ENCODE measurements at regions of chr15 and their contacts with region 1.

Region 1: DNA sequence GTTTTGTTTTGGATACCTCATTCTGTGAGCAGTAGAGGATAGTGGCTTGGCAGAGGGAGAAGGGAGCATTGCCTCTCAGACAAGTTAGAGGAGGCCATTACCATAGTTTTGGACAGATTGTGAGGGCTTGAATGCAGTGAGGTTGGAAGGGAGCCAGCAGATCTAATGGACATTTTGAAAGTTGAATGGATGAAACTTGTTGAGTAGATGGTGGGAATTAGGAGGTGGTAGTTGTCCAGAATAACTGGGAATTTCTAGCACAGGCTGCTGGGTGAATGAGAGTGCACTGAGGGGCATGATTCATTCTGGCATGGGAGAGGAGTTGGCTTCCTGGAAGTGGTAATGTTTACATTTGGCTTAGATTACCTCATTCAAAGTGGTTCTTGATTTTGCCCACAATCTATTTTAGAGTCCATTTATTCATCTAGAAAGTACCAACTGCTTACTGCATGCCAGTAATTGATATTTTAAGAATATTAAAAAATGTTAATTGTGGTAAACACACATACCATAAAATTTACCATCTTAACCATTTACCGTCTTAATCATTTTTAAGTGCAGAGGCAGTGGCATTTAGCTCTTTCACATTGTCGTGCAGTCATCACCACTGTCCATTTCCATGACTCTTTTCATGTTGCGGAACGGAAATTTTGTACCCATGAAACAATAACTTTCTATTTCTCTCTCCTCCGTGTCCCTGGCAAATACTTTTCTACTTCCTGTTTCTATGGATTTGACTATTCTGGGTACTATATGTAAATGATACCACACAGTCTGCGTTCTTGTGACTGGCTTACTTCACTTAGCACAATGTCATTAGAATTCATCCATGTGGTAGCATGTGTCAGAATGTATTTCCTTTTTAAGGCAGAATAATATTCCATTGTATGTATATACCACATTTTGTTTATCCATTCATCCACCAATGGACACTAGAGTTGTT is 27.7 kb downstream of the AKAP13 start:
- DNase-seq: peak; percentile 55
- H3K4me3 ChIP-seq: peak overlapping the region; percentile 16
- H3K27ac ChIP-seq: peak overlapping the region; percentile 97
- H3K4me1 ChIP-seq: peaks cover 92% of the 10 kb centered on the region
- CTCF ChIP-seq: no peak

Region 2: GRCh38 chr15:85361323-85361722 is 46.8 kb before region 1 on chr15:
- CTCF ChIA-PET with region 1: no interaction called
- POLR2A ChIA-PET with region 1: interaction called, 12 read pairs
- intact Hi-C with region 1: no loop called
- DNase-seq: peak; percentile 16
- H3K4me3 ChIP-seq: no peak overlapping the region
- H3K27ac ChIP-seq: no peak overlapping the region
- H3K4me1 ChIP-seq: peaks cover 11% of the 10 kb centered on the region
- CTCF ChIP-seq: no peak

Region 3: GRCh38 chr15:85388566-85389305 is 19.3 kb before region 1 on chr15:
- CTCF ChIA-PET with region 1: interaction called, 14 read pairs
- POLR2A ChIA-PET with region 1: interaction called, 335 read pairs
- intact Hi-C with region 1: loop called (anchors 2 kb)
- DNase-seq: no peak
- H3K4me3 ChIP-seq: peak overlapping the region; percentile 58
- H3K27ac ChIP-seq: peak overlapping the region; percentile 88
- H3K4me1 ChIP-seq: peaks cover 85% of the 10 kb centered on the region
- CTCF ChIP-seq: no peak

Region 4: GRCh38 chr15:85394552-85395333 is 13.3 kb before region 1 on chr15:
- CTCF ChIA-PET with region 1: interaction called, 14 read pairs
- POLR2A ChIA-PET with region 1: interaction called, 335 read pairs
- intact Hi-C with region 1: loop called (anchors 2 kb)
- DNase-seq: no peak
- H3K4me3 ChIP-seq: no peak overlapping the region
- H3K27ac ChIP-seq: no peak overlapping the region
- H3K4me1 ChIP-seq: peaks cover 74% of the 10 kb centered on the region
- CTCF ChIP-seq: no peak

Region 5: DNA sequence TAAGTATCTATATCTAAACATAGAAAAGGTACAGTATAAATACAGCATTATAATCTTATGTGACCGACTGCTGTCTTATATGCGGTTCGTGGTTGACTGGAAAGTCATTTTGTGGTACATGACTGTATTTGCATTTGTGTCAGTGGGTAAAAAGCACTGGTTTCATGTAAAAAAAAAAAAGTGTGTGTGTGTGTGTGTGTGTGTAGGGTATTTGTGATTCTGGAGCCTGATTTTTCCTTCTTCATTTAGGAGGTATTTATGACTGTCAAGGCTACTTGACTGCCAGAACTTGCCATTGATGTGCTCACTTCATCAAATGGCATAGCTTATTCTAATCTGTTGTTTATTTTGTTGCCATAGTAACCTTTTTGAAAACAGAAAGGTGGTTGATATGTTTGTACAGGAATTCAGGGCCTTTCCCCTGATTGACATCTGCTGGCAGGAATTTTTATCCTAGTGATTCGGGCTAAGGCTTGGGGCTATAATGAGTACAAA is 35.6 kb after region 1 on chr15:
- CTCF ChIA-PET with region 1: no interaction called
- POLR2A ChIA-PET with region 1: interaction called, 24 read pairs
- intact Hi-C with region 1: loop called (anchors 5 kb)
- DNase-seq: peak; percentile 52
- H3K4me3 ChIP-seq: peak overlapping the region; percentile 56
- H3K27ac ChIP-seq: peak overlapping the region; percentile 70
- H3K4me1 ChIP-seq: peaks cover 57% of the 10 kb centered on the region
- CTCF ChIP-seq: no peak

Region 6: DNA sequence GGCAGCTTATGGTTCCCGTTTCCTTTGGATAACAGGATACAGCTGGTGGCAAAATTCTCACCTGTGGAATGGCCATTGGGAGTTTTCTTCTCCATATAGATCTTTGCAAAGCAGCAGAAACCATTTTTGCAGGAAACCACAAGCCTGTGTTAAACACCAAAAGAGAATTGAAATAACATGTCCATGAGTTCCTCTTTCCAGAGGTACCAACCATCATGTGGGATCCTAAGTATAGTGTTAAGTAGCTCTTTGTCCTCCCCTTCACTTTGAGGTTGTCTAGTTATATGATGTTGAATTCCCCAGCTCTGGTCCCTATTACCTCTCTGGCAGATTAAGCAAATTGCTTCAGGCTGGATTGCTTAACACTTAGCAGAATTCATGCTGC is 67.2 kb after region 1 on chr15:
- CTCF ChIA-PET with region 1: interaction called, 10 read pairs
- POLR2A ChIA-PET with region 1: interaction called, 66 read pairs
- intact Hi-C with region 1: no loop called
- DNase-seq: peak; percentile 85
- H3K4me3 ChIP-seq: peak overlapping the region; percentile 52
- H3K27ac ChIP-seq: peak overlapping the region; percentile 92
- H3K4me1 ChIP-seq: peaks cover 99% of the 10 kb centered on the region
- CTCF ChIP-seq: no peak

Region 7: GRCh38 chr15:85515212-85515611 is 107.1 kb after region 1 on chr15:
- CTCF ChIA-PET with region 1: no interaction called
- POLR2A ChIA-PET with region 1: no interaction called
- intact Hi-C with region 1: no loop called
- DNase-seq: no peak
- H3K4me3 ChIP-seq: no peak overlapping the region
- H3K27ac ChIP-seq: no peak overlapping the region
- H3K4me1 ChIP-seq: no peaks in the 10 kb centered on the region
- CTCF ChIP-seq: no peak

Region 8: GRCh38 chr15:85618956-85619491 is 210.9 kb after region 1 on chr15:
- CTCF ChIA-PET with region 1: no interaction called
- POLR2A ChIA-PET with region 1: no interaction called
- intact Hi-C with region 1: no loop called
- DNase-seq: no peak
- H3K4me3 ChIP-seq: no peak overlapping the region
- H3K27ac ChIP-seq: no peak overlapping the region
- H3K4me1 ChIP-seq: no peaks in the 10 kb centered on the region
- CTCF ChIP-seq: no peak

Region 9: DNA sequence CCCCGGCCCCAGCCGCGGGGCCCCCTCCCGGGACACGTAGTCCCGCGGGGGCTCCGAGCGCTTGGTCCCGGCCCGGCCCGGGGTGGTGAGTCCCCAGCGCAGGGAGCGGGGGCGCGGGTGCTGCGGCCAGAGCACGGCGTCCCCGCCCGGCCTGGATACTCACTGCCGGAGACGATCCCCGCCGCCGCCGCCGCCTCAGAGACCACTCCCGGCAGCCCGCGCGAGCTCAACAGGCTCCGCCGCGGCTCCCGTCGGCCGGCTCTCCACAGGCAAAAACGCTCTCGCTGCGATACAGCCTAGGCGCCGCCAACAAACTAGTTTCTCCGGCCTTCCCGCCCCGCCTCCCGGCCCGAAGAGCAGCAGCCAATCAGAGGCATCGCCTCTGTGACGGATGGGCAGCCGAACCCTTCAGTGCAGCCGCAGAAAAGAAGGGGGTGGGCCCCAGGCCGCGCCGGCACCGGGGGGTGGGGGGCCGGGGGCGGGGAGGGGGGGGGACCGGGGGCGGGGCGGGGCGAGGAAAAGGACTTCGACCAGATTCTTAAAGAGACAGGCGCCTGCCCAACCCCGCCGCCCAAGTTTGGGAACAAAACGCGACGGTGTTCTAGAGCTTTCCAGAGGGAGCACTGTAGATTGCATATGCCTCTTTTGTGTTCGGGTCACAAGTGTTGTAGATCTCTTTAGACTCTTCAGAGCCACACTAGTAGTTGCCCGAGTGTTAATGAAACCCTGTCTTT is 386.7 kb after region 1 on chr15 and contains the start of gene KLHL25:
- CTCF ChIA-PET with region 1: no interaction called
- POLR2A ChIA-PET with region 1: no interaction called
- intact Hi-C with region 1: no loop called
- DNase-seq: peak; percentile 96
- H3K4me3 ChIP-seq: peak within 1 kb of the TSS; percentile 90
- H3K27ac ChIP-seq: peak within 1 kb of the TSS; percentile 39
- H3K4me1 ChIP-seq: peaks cover 21% of the 10 kb centered on the region
- CTCF ChIP-seq: no peak
- total RNA-seq, gene KLHL25: 4.5 and 7.7 TPM in 2 replicates